ENCODE measurements at regions of chr18 and their contacts with region 1.

Region 1: GRCh38 chr18:9334329-9334972 is at the start of gene TWSG1:
- DNase-seq: peak; percentile 97 to 99
- ATAC-seq: peak; percentile 97
- H3K4me3 ChIP-seq: peak within 1 kb of the TSS; percentile 83 to 99
- H3K27ac ChIP-seq: peak within 1 kb of the TSS; percentile 51 to 66
- H3K4me1 ChIP-seq: peaks cover 0 to 4% of the 10 kb centered on the region in 2 donors
- H3K27me3 ChIP-seq: no peaks in the 10 kb centered on the region
- total RNA-seq, gene TWSG1: 100 to 148 TPM

Region 2: GRCh38 chr18:9079818-9080528 is 254.5 kb before region 1 on chr18:
- intact Hi-C with region 1: loop called in 1 of 2 experiments (anchors 10 kb)
- DNase-seq: no peak
- ATAC-seq: no peak
- H3K4me3 ChIP-seq: no peak overlapping the region
- H3K27ac ChIP-seq: no peak overlapping the region
- H3K4me1 ChIP-seq: no peaks in the 10 kb centered on the region
- H3K27me3 ChIP-seq: no peaks in the 10 kb centered on the region

Region 3: GRCh38 chr18:9136315-9137155 is 197.9 kb before region 1 on chr18 and contains the start of gene ANKRD12:
- intact Hi-C with region 1: loop called in 1 of 2 experiments (anchors 5 kb)
- DNase-seq: peak; percentile 98 to 99
- ATAC-seq: peak; percentile 98
- H3K4me3 ChIP-seq: peak within 1 kb of the TSS; percentile 78 to 96
- H3K27ac ChIP-seq: peak within 1 kb of the TSS; percentile 96 to 100
- H3K4me1 ChIP-seq: peaks cover 0 to 4% of the 10 kb centered on the region in 2 donors
- H3K27me3 ChIP-seq: no peaks in the 10 kb centered on the region
- total RNA-seq, gene ANKRD12: 86.5 to 112 TPM

Region 4: GRCh38 chr18:9366192-9366591 is 31.7 kb after region 1 on chr18:
- intact Hi-C with region 1: loop called in 1 of 2 experiments (anchors 2 kb)
- DNase-seq: peak in 1 of 2 donors; percentile 51
- ATAC-seq: peak; percentile 73
- H3K4me3 ChIP-seq: no peak overlapping the region
- H3K27ac ChIP-seq: peak overlapping the region in 1 of 2 donors; percentile 75
- H3K4me1 ChIP-seq: peaks cover 0 to 7% of the 10 kb centered on the region in 2 donors
- H3K27me3 ChIP-seq: no peaks in the 10 kb centered on the region

Region 5: DNA sequence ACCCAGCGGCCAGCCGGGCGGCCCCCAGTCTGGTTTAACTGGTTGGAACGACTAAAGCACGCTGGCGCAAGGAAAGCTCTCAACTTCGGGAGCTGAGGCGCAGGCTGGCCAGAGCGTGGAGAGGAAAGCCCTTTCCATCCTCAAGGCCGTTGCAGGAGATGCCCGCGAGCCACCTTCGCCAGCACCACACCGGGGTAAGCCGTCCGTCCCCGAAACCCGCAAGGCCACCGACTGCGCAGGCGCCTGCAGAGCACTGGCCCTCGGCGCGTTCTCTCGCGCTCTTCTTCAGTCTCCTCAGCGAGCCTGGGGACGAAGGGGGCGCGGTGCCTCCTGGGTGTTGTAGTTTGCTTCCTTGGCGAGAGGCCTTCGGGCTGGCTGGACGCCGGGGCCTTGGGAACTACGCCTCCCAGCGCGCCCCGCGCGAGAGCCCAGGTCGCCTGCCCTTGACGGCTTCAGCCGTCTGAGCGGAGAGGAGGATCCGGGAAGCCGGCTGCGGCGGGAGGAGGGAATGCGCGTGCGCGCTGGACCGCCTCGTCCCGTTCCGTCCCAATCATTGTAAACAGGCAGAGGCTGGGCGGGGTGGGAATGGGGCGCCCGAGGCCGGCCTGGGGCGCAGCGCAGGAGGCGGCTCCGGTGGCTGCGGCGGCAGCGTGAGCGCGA is 140.7 kb after region 1 on chr18 and contains the start of gene RALBP1:
- intact Hi-C with region 1: loop called (anchors 1 to 10 kb)
- DNase-seq: peak; percentile 100
- ATAC-seq: peak; percentile 100
- H3K4me3 ChIP-seq: peak within 1 kb of the TSS; percentile 61 to 91
- H3K27ac ChIP-seq: peak within 1 kb of the TSS in 1 of 2 donors; percentile 96
- H3K4me1 ChIP-seq: peaks cover 0 to 2% of the 10 kb centered on the region in 2 donors
- H3K27me3 ChIP-seq: no peaks in the 10 kb centered on the region
- total RNA-seq, gene RALBP1: 52.6 to 55.3 TPM

Measured in aorta (tissue), 5 donors.